ENCODE measurements at regions of chr21 and their contacts with region 1.

Region 1: DNA sequence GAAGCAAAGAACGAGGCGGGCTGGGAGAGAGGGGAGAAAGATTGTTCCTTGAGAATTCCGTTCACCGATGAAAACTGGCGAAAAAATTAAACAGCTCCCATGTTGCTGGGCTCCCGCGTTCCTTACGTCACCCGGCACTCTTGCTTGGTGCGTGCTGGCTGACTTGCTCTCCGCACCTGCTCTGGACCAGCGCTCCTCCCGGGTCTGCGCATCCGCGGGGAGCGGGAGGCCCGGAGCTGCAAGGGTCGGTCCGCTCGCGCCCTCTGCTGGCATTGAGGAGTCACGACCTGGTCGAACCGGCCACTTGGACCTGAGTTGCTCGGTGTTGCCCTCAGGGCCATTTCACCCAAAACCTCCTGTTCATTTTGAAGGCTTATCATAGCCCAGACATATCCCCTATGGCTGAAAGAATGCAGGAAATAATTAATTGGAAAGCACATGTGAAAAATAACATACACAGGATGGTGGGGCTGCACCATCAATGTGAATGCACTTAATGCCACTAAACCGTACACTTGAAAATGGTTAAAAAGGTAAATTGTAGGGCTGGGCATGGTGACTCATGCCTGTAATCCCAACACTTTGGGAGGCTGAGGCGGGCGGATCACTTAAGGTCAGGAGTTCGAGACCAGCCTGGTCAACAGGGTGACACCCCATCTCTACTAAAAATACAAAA is 98.9 kb upstream of the BACE2 start:
- H3K4me3 ChIP-seq: peak overlapping the region; percentile 16
- H3K27ac ChIP-seq: no peak overlapping the region
- H3K4me1 ChIP-seq: no peaks in the 10 kb centered on the region
- CTCF ChIP-seq: peak; percentile 87

Region 2: GRCh38 chr21:40143822-40144525 is 925.1 kb before region 1 on chr21:
- CTCF ChIA-PET with region 1: interaction called, 14 read pairs
- POLR2A ChIA-PET with region 1: no interaction called
- H3K4me3 ChIP-seq: no peak overlapping the region
- H3K27ac ChIP-seq: no peak overlapping the region
- H3K4me1 ChIP-seq: no peaks in the 10 kb centered on the region
- CTCF ChIP-seq: no peak

Region 3: DNA sequence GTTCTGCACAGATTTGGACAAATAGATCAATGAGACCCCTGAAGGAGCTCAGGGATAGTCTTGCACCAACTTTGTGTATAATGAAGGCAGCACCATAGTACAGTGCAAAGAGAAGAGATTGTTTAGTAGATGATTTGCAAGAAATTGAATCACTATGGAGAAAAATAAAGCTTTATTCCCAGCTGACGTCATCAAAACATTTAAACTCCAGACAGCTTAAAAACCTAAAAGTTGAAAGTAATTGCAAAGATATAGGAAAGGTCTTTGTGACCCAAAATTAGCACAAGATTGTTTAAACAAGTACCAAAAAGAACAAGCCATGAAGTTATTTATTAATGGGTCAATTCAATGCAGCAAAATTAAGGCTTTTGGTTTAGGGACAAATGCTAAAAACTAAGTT is 10.1 kb after region 1 on chr21:
- CTCF ChIA-PET with region 1: interaction called, 11 read pairs
- POLR2A ChIA-PET with region 1: no interaction called
- H3K4me3 ChIP-seq: no peak overlapping the region
- H3K27ac ChIP-seq: no peak overlapping the region
- H3K4me1 ChIP-seq: no peaks in the 10 kb centered on the region
- CTCF ChIP-seq: no peak

Measured in HEK293 (cell line).